ENCODE measurements at regions of chr17 and their contacts with region 1.

Region 1: GRCh38 chr17:57671667-57672632 is 73.1 kb downstream of the CCDC182 start:
- DNase-seq: peak; percentile 71 to 85 (median 83)
- H3K4me3 ChIP-seq: no peak overlapping the region
- H3K27ac ChIP-seq: no peak overlapping the region
- H3K4me1 ChIP-seq: peaks cover 0 to 28% (median 10%) of the 10 kb centered on the region in 4 experiments
- H3K27me3 ChIP-seq: no peaks in the 10 kb centered on the region

Region 2: GRCh38 chr17:57597531-57598453 is 74.2 kb before region 1 on chr17:
- CTCF ChIA-PET with region 1: interaction called, 10 read pairs
- POLR2A ChIA-PET with region 1: no interaction called
- DNase-seq: peak in 2 of 3 donors; percentile 42 to 44
- H3K4me3 ChIP-seq: peak overlapping the region in 1 of 7 experiments; percentile 8
- H3K27ac ChIP-seq: no peak overlapping the region
- H3K4me1 ChIP-seq: peaks cover 23 to 59% (median 57%) of the 10 kb centered on the region in 4 experiments
- H3K27me3 ChIP-seq: no peaks in the 10 kb centered on the region

Region 3: GRCh38 chr17:57714665-57715180 is 42.8 kb after region 1 on chr17:
- CTCF ChIA-PET with region 1: no interaction called
- POLR2A ChIA-PET with region 1: no interaction called
- DNase-seq: no peak
- H3K4me3 ChIP-seq: no peak overlapping the region
- H3K27ac ChIP-seq: no peak overlapping the region
- H3K4me1 ChIP-seq: peaks cover 0 to 7% (median 0%) of the 10 kb centered on the region in 4 experiments
- H3K27me3 ChIP-seq: peaks cover 0 to 10% (median 0%) of the 10 kb centered on the region in 5 experiments